AG04449 (cell line): ENCODE measurements at regions of chr2 and their contacts with region 1.

Region 1: DNA sequence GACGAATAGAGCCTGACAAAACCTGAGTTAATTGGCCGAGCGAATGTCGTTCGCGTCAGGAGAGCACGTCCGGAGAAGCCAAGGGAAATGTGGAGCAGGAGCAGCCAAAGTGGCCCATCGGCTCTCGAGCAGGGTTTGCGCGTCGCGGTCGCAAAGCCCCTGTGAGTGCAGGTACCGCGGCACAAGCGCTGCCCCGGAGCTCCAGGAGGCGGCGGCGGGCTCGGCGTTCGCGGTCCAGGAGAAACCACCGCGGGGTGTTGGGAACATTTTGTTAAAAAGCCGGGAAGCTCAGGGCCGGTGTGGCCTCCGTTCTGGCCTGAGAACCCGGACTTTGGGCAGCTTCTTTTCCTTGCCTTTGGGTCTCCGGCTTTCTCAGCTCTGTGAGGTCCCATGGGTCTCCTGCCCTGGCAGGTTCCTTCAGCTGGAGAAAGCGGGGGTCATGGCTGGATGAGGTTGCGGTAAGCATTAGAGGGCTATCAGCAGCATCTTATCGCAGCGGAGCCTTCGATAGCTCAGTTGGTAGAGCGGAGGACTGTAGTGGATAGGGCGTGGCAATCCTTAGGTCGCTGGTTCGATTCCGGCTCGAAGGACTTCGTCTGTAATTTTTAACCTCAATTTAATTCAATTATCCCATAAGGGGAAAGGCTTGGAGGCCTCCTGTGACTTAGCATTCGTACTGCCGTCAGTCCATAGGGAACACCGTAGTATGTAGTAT is 1.0 kb upstream of the AGBL5 start:
- DNase-seq: peak; percentile 92
- H3K4me3 ChIP-seq: peak overlapping the region; percentile 93
- CTCF ChIP-seq: peak; percentile 57

Region 2: GRCh38 chr2:27032495-27033252 is 17.8 kb before region 1 on chr2 and contains the start of gene TMEM214:
- CTCF ChIA-PET with region 1: interaction called, 9 read pairs
- POLR2A ChIA-PET with region 1: interaction called, 24 read pairs
- DNase-seq: no peak
- H3K4me3 ChIP-seq: peak within 1 kb of the TSS; percentile 99
- CTCF ChIP-seq: no peak

Region 3: GRCh38 chr2:27071277-27071989 is 21.0 kb after region 1 on chr2 and contains the start of gene OST4:
- CTCF ChIA-PET with region 1: interaction called, 7 read pairs
- POLR2A ChIA-PET with region 1: interaction called, 31 read pairs
- DNase-seq: peak; percentile 56
- H3K4me3 ChIP-seq: peak within 1 kb of the TSS; percentile 91
- CTCF ChIP-seq: no peak

Region 4: DNA sequence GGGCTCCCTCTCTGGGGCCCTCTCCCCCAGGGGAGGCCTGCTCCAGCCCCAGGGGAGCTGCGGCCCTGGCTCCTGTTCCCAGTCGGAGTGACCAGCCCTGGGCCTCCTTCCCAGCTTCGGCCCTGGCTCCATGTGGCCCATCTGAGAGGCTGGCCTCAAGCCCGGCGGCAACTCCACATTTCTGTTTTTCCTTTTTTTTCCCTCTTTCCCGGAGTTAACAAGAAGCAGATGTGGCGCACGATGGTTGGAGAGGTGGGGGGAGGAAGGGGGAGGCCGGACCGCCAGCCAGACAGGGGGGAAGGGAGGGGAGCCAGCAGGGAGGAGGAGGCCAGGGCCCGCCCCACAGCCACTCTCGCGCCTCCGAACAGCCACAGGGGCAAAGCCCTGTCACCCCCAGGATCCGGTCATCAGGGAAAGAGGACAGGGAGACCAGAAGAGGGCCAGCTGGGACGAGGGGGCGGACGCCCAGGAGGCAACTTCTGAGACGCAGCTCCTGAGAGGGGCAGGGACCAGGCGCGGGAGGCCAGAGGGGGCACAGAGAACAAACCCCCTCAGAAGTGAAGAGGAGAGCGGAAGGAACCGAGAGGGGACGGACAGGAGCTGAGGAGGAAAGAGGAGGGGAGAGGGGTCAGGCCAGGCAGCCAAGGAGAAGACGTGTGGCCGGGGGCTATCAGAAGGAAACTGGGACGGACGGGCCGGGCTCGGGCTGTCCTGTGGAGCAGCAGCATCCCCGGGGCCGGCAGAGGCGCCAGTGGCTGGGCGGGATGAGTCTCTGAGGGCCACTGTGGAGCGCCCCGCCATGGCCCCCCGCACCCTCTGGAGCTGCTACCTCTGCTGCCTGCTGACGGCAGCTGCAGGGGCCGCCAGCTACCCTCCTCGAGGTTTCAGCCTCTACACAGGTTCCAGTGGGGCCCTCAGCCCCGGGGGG is 28.1 kb after region 1 on chr2 and contains the start of gene EMILIN1:
- CTCF ChIA-PET with region 1: interaction called, 35 read pairs
- POLR2A ChIA-PET with region 1: interaction called, 26 read pairs
- DNase-seq: peak; percentile 83
- H3K4me3 ChIP-seq: peak within 1 kb of the TSS; percentile 95
- CTCF ChIP-seq: peak; percentile 8

Region 5: DNA sequence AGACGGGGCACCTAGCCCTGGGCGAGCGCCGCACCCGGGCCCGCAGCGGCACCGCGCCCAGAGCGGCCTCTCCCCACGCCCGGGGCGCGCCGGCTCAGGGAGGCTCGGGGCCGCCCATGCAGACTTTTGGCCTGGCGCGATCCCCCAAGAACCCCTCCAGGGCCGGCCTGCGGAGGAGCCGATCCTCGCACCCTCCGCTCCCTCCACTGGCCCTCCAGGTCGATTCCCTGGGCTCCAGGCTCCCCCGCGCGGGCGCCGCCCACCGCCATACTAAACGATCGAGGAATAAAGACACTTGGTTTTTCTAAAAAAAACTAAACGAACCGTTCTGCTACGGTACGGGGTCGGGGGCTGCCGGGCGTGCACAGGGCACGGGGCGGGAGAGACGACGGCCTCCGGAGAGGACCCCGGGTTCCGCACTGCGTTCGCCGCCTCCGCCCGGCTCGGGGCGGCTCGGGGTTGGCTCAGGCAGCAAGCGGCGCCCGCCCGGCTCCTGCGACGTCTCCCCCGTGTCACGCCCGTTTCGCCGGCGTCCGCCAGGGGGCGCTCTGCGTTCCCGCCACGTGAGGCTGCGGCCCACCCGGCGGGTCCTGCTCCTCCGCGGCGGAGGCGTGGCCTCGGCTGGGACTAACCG is 35.8 kb after region 1 on chr2:
- CTCF ChIA-PET with region 1: interaction called, 35 read pairs
- POLR2A ChIA-PET with region 1: interaction called, 18 read pairs
- DNase-seq: no peak
- H3K4me3 ChIP-seq: peak overlapping the region; percentile 42
- CTCF ChIP-seq: peak; percentile 94